Naive thymus-derived CD8-positive, alpha-beta T cell (primary cell): ENCODE measurements at regions of chr3 and their contacts with region 1.

Region 1: GRCh38 chr3:60294181-60294580 is 957.1 kb downstream of the FHIT start:
- DNase-seq: no peak
- ATAC-seq: no peak
- H3K4me3 Mint-ChIP-seq: no peak overlapping the region
- H3K27ac Mint-ChIP-seq: no peak overlapping the region
- H3K4me1 Mint-ChIP-seq: peaks cover 0 to 7% (median 4%) of the 10 kb centered on the region in 4 donors
- H3K27me3 Mint-ChIP-seq: no peaks in the 10 kb centered on the region

Region 2: DNA sequence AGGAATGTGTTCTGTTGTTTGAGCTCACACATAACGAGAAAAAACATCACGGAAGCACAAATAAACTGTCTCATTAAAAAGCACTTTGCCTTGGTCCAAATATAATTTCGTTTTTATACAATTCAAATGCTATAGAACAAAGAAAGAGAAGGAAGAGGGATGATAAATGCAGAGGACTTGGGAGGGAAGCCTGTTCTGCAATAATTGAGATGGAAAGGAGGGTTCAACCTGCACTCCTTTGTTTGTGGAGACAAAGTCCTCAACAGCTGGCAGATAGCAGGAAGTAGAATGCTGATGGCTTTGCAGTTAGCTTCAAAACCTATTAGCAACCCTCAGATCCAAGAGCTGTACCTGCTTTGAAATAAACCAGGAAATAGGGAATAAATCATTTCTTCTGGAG is 53.7 kb before region 1 on chr3:
- POLR2A ChIA-PET with region 1: no interaction called
- DNase-seq: no peak
- ATAC-seq: no peak
- H3K4me3 Mint-ChIP-seq: no peak overlapping the region
- H3K27ac Mint-ChIP-seq: no peak overlapping the region
- H3K4me1 Mint-ChIP-seq: peaks cover 0 to 12% (median 4%) of the 10 kb centered on the region in 4 donors
- H3K27me3 Mint-ChIP-seq: no peaks in the 10 kb centered on the region

Region 3: DNA sequence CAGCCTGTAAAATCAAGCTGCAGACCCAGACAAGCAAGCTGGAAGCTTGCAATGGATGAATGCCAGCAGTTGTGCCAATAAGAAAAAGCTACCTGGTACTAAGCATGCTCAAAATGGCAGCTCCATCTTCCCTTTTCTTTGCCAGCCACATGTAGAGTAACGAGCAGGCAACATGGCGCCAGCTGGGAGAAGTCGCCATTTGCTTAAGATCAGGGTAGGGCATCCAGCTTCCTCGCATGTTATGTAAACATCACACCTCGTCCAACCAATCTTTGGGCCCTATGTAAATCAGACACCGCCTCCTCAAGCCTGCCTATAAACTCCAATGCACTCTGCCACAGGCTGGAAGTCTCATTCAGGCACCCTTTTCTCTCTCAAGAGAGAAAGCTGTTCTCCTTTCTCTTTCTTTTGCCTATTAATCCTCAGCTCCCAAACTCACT is 16.8 kb before region 1 on chr3:
- POLR2A ChIA-PET with region 1: interaction called, 10 read pairs
- DNase-seq: no peak
- ATAC-seq: no peak
- H3K4me3 Mint-ChIP-seq: no peak overlapping the region
- H3K27ac Mint-ChIP-seq: no peak overlapping the region
- H3K4me1 Mint-ChIP-seq: no peaks in the 10 kb centered on the region
- H3K27me3 Mint-ChIP-seq: no peaks in the 10 kb centered on the region